ENCODE measurements at regions of chr10 and their contacts with region 1.

Region 1: GRCh38 chr10:23095404-23095965 is at the start of gene MSRB2:
- DNase-seq: peak; percentile 96 to 97
- ATAC-seq: peak; percentile 94
- H3K4me3 ChIP-seq: peak within 1 kb of the TSS; percentile 62 to 85
- H3K27ac ChIP-seq: peak within 1 kb of the TSS; percentile 68 to 89
- H3K4me1 ChIP-seq: no peaks in the 10 kb centered on the region
- H3K27me3 ChIP-seq: no peaks in the 10 kb centered on the region
- total RNA-seq, gene MSRB2: 30.4 to 34.5 TPM

Region 2: GRCh38 chr10:22010973-22011408 is 1084.5 kb before region 1 on chr10:
- intact Hi-C with region 1: loop called in 1 of 2 experiments (anchors 5 kb)
- DNase-seq: no peak
- ATAC-seq: no peak
- H3K4me3 ChIP-seq: no peak overlapping the region
- H3K27ac ChIP-seq: no peak overlapping the region
- H3K4me1 ChIP-seq: no peaks in the 10 kb centered on the region
- H3K27me3 ChIP-seq: no peaks in the 10 kb centered on the region

Region 3: DNA sequence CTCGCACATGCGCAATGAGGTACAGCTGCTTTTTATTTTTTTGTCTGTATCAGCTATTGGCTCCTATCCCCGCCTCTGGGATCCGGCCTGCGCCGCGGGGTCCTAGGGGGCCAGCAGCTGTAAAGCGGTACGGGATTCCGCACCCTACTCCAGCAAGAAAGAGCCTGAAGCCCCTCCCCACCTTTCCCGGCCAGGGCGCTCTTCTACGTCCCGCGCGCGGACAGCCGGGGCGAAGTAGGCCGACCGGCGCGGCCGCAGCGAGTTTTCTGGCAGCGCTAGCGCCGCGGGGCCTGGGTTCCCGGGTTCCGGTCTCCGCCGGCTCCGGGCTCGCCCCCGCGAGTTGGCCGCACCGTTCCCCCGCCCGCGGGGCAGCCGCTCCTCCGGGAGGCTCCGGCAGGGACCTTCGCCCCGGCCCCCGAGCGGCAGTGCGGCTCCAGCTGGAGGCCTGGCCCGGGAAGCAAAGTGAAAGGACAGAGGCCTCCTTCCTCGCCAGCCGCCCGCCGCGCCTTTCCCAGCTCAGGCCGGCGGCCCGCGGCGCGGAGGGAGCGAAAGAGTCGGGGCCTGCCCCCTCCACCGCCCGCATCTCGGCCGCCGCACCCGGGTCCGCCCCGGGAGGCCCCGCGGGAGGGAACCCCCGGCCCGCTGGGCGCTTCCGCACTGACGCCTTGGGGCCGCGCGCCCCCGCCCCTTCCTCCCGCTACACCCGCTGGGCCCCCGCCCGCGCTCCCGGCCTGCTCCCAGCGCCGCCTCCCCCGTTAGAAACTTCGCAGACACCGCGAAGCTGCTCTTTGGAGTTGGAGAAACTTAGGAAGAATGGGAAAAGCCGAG is 754.9 kb before region 1 on chr10:
- intact Hi-C with region 1: loop called (anchors 10 kb)
- DNase-seq: peak; percentile 81 to 90
- ATAC-seq: peak; percentile 90
- H3K4me3 ChIP-seq: peak overlapping the region; percentile 83 to 94
- H3K27ac ChIP-seq: peak overlapping the region; percentile 73 to 77
- H3K4me1 ChIP-seq: no peaks in the 10 kb centered on the region
- H3K27me3 ChIP-seq: peaks cover 0 to 2% of the 10 kb centered on the region in 2 donors

Region 4: GRCh38 chr10:23186697-23187096 is 91.2 kb after region 1 on chr10:
- intact Hi-C with region 1: no loop called
- DNase-seq: no peak
- ATAC-seq: no peak
- H3K4me3 ChIP-seq: no peak overlapping the region
- H3K27ac ChIP-seq: no peak overlapping the region
- H3K4me1 ChIP-seq: no peaks in the 10 kb centered on the region
- H3K27me3 ChIP-seq: no peaks in the 10 kb centered on the region

Measured in aorta (tissue), 5 donors.